ENCODE measurements at regions of chr3 and their contacts with region 1.

Region 1: DNA sequence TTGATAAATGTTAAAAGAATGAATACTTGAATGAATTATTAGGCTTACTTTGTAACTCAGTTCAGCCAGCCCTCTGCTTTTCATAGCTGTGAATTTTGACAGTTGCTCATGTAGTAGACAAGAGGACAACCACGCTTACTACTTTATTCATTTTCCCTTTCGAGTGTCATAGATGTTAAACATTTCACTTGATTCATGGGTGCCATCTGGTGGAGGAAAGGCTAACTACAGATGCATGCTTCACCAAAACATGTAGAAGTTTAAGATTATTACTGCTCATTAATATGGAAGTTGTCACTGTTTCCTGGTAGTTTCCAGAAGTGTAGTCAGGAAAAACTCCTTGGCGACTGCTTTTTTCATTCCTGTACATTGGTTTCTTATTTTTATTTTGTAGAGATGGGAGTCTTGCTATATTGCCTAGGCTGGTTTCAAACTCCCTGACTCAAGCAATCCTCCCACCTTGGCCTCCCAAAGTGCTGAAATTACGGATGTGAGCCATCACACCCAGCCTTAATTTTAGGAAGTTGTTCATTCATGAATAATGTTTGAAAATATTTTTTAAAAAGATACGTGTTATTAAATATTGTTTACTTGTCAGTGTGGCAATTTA is 163.2 kb downstream of the B3GALNT1 start:
- DNase-seq: peak; percentile 84
- H3K4me3 ChIP-seq: no peak overlapping the region
- H3K27ac ChIP-seq: no peak overlapping the region
- H3K4me1 ChIP-seq: no peaks in the 10 kb centered on the region
- H3K27me3 ChIP-seq: no peaks in the 10 kb centered on the region
- CTCF ChIP-seq: peak; percentile 83

Region 2: GRCh38 chr3:160709477-160710182 is 232.4 kb before region 1 on chr3:
- intact Hi-C with region 1: loop called (anchors 2 kb)
- DNase-seq: no peak
- H3K4me3 ChIP-seq: no peak overlapping the region
- H3K27ac ChIP-seq: no peak overlapping the region
- H3K4me1 ChIP-seq: no peaks in the 10 kb centered on the region
- H3K27me3 ChIP-seq: no peaks in the 10 kb centered on the region
- CTCF ChIP-seq: no peak